ENCODE measurements at regions of chr19 and their contacts with region 1.

Region 1: DNA sequence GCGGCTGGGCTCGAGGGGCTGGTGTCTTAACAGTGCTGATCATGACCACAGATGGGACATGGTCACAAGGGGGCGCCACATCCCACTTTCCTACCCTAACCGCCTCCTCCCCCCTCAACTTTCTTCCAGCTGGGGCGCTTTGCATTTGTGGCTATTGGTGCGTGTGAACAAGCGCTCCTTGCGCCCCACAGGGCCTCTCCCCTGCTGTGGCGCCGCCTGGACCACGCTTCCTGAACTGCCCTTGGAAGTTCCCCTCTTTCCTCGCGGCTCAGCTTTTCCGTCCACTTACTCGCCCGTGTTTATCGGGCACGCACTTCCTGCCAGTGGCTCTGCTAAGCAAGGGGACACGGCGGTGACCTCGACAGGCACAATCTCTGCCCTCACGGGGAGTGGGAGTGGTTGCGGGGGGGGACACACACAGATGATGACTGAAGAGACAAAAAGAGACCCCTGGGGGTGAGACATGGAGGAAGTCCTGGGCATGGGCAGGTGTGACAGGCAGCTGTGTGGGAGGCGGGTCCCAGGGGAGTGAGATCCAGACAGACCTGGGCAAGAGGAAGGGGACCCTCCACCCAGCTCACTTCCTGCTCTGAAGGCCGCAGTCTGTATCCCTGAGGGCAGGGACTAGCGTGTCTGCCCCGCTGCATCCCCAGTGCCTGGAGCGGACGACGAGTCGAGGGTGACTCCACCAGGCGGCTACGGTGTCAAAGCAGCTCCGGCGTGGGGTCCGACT is 40.3 kb downstream of the ZNF787 start:
- DNase-seq: peak; percentile 83 to 86
- ATAC-seq: peak; percentile 70 to 93 (median 78)
- H3K4me3 ChIP-seq: peak overlapping the region; percentile 19 to 61 (median 51)
- H3K27ac ChIP-seq: peak overlapping the region in 7 of 10 donors; percentile 3 to 62 (median 41)
- H3K4me1 ChIP-seq: peaks cover 2 to 15% (median 10%) of the 10 kb centered on the region in 9 donors
- H3K27me3 ChIP-seq: no peaks in the 10 kb centered on the region
- CTCF ChIP-seq: peak; percentile 32 to 65 (median 59)

Region 2: GRCh38 chr19:55966589-55966988 is 114.2 kb before region 1 on chr19:
- intact Hi-C with region 1: no loop called
- DNase-seq: no peak
- ATAC-seq: no peak
- H3K4me3 ChIP-seq: no peak overlapping the region
- H3K27ac ChIP-seq: no peak overlapping the region
- H3K4me1 ChIP-seq: no peaks in the 10 kb centered on the region
- H3K27me3 ChIP-seq: no peaks in the 10 kb centered on the region
- CTCF ChIP-seq: no peak

Region 3: DNA sequence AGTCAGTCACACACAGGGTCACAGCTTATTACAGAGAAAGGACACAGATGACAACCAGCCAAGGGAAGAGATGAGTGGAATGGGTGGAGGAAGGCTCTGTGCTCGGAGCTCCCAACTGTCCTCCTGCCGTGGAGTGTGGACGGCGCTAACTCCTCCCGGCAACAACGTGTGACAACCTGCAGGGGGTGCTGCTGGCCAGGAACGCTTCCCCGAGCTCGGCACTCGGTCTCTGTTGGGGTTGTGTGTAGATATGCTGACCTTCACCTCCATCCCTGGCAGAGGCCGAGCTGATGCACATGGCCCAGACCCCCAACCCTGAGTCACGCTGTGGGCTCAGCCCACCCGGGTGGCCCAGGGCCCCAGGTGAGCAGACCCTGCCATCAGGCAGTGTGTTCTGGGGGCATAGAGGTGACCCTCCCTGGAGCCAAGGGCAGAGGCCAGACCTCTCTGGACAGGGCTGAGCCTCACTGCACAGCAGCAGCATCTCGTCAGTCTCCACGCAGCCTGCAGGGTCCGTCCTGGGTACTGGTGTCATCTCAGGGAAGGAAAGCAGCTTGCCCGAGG is 74.4 kb after region 1 on chr19:
- intact Hi-C with region 1: loop called in 1 of 10 experiments (anchors 5 kb)
- DNase-seq: peak in 1 of 2 donors; percentile 36
- ATAC-seq: peak in 5 of 8 donors; percentile 36 to 45 (median 43)
- H3K4me3 ChIP-seq: no peak overlapping the region
- H3K27ac ChIP-seq: peak overlapping the region in 4 of 10 donors; percentile 69 to 89 (median 73)
- H3K4me1 ChIP-seq: peaks cover 0 to 37% (median 16%) of the 10 kb centered on the region in 9 donors
- H3K27me3 ChIP-seq: no peaks in the 10 kb centered on the region
- CTCF ChIP-seq: peak; percentile 23 to 55 (median 45)

Region 4: DNA sequence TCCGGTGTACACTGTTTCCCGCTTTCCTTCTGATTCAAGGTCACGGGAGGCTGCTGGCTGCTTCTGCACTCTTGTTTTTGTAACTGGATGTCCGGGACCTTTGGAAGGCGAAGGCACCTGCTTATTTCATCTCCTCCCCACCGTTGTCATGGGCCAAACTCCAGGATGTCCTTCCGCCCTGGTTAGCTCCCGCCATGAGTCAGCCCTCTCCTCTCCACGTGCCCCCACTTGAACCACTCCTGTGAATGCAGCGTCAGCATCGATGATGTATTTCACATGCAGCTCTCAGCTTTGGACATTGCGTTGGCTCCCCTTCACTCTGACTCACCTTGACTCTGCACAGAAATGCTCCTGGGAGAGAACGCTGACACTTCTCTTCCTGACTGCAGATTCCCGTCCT is 89.4 kb after region 1 on chr19:
- intact Hi-C with region 1: loop called (anchors 1 to 5 kb)
- DNase-seq: peak in 1 of 2 donors; percentile 26
- ATAC-seq: peak in 7 of 8 donors; percentile 34 to 85 (median 75)
- H3K4me3 ChIP-seq: no peak overlapping the region
- H3K27ac ChIP-seq: peak overlapping the region in 3 of 10 donors; percentile 15 to 60 (median 15)
- H3K4me1 ChIP-seq: peaks cover 0 to 9% (median 4%) of the 10 kb centered on the region in 9 donors
- H3K27me3 ChIP-seq: peaks cover 0 to 18% (median 6%) of the 10 kb centered on the region in 7 donors
- CTCF ChIP-seq: no peak

Region 5: DNA sequence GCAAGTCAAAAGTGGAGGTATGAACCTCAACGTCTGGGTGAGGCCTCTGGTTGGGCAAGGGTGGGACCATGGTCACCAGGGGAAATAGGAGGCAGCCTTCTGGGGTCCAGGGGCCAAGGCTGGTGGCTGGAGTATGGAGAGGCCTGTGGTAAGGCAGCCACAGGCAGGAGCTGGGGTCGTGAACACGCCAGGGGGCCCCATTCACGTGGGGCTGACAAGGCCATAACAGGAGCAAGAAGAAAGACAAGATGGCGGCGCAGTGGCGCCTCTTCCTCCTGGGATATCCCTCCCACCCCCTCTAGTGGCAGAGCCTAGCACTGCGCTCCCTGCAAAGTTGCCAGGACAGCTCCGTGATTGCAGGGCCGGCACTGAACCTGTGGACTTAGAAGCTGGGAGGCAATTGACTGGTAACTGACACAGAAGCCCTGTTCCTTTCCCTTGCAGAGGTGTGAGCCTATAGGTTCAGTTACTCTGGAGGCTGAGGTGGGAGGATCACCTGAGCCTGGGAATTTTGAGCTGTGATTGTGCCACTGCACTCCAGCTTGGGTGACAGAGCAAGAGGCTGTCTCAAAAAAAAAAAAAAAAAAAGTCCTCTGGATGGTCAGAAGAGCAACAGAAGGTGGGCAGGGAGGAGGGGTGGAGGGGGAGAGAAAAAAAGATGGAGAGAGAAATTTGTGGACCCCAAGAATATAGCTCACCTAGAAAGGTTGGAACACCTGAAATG is 172.0 kb after region 1 on chr19:
- intact Hi-C with region 1: loop called in 7 of 10 experiments (anchors 5 to 10 kb)
- DNase-seq: peak; percentile 57 to 85
- ATAC-seq: peak; percentile 43 to 86 (median 76)
- H3K4me3 ChIP-seq: no peak overlapping the region
- H3K27ac ChIP-seq: no peak overlapping the region
- H3K4me1 ChIP-seq: peaks cover 0 to 4% (median 0%) of the 10 kb centered on the region in 9 donors
- H3K27me3 ChIP-seq: no peaks in the 10 kb centered on the region
- CTCF ChIP-seq: peak; percentile 58 to 87 (median 79)

Region 6: GRCh38 chr19:56258272-56258671 is 177.4 kb after region 1 on chr19:
- intact Hi-C with region 1: loop called in 7 of 10 experiments (anchors 5 to 10 kb)
- DNase-seq: no peak
- ATAC-seq: no peak
- H3K4me3 ChIP-seq: no peak overlapping the region
- H3K27ac ChIP-seq: no peak overlapping the region
- H3K4me1 ChIP-seq: peaks cover 0 to 4% (median 0%) of the 10 kb centered on the region in 9 donors
- H3K27me3 ChIP-seq: no peaks in the 10 kb centered on the region
- CTCF ChIP-seq: no peak

Region 7: GRCh38 chr19:56333505-56333904 is 252.7 kb after region 1 on chr19:
- intact Hi-C with region 1: loop called in 5 of 10 experiments (anchors 5 to 10 kb)
- DNase-seq: peak in 1 of 2 donors; percentile 26
- ATAC-seq: peak in 2 of 8 donors; percentile 50 to 52
- H3K4me3 ChIP-seq: no peak overlapping the region
- H3K27ac ChIP-seq: no peak overlapping the region
- H3K4me1 ChIP-seq: no peaks in the 10 kb centered on the region
- H3K27me3 ChIP-seq: no peaks in the 10 kb centered on the region
- CTCF ChIP-seq: peak in 8 of 9 donors; percentile 42 to 75 (median 70)

Region 8: GRCh38 chr19:56350416-56351045 is 269.7 kb after region 1 on chr19:
- intact Hi-C with region 1: loop called in 6 of 10 experiments (anchors 5 to 10 kb)
- DNase-seq: peak in 1 of 2 donors; percentile 54
- ATAC-seq: peak in 1 of 8 donors; percentile 56
- H3K4me3 ChIP-seq: no peak overlapping the region
- H3K27ac ChIP-seq: no peak overlapping the region
- H3K4me1 ChIP-seq: no peaks in the 10 kb centered on the region
- H3K27me3 ChIP-seq: no peaks in the 10 kb centered on the region
- CTCF ChIP-seq: peak; percentile 80 to 95 (median 89)